ENCODE measurements at regions of chr1 and their contacts with region 1.

Region 1: GRCh38 chr1:47725992-47726855 is 271.0 kb downstream of the TRABD2B start:
- DNase-seq: peak; percentile 43
- ATAC-seq: peak; percentile 91
- H3K4me3 ChIP-seq: no peak overlapping the region
- H3K27ac ChIP-seq: no peak overlapping the region
- H3K4me1 ChIP-seq: peaks cover 17% of the 10 kb centered on the region; the same call in 1 of the 2 replicates
- H3K27me3 ChIP-seq: peaks cover 7 to 57% of the 10 kb centered on the region in 2 experiments; a peak in 4 of 5 replicates
- CTCF ChIP-seq: peak; percentile 91
- EP300 ChIP-seq: no peak
- POLR2A ChIP-seq: no peak
- RAD21 ChIP-seq: peak; percentile 70

Region 2: GRCh38 chr1:47388891-47389238 is 337.4 kb before region 1 on chr1:
- CTCF ChIA-PET with region 1: interaction called, 6 read pairs
- POLR2A ChIA-PET with region 1: no interaction called
- in situ Hi-C with region 1: no loop called
- intact Hi-C with region 1: loop called (anchors 5 kb)
- DNase-seq: peak; percentile 62
- ATAC-seq: peak; percentile 80
- H3K4me3 ChIP-seq: no peak overlapping the region
- H3K27ac ChIP-seq: no peak overlapping the region
- H3K4me1 ChIP-seq: peaks cover 54% of the 10 kb centered on the region
- H3K27me3 ChIP-seq: no peaks in the 10 kb centered on the region
- CTCF ChIP-seq: peak; percentile 83
- EP300 ChIP-seq: no peak
- POLR2A ChIP-seq: no peak; a peak in 1 of 4 replicates
- RAD21 ChIP-seq: peak; percentile 81

Region 3: GRCh38 chr1:47432071-47433036 is 293.9 kb before region 1 on chr1:
- CTCF ChIA-PET with region 1: interaction called, 7 read pairs
- POLR2A ChIA-PET with region 1: interaction called, 3 read pairs
- in situ Hi-C with region 1: no loop called
- intact Hi-C with region 1: loop called (anchors 1 kb)
- DNase-seq: peak; percentile 39
- ATAC-seq: peak; percentile 72
- H3K4me3 ChIP-seq: no peak overlapping the region
- H3K27ac ChIP-seq: no peak overlapping the region
- H3K4me1 ChIP-seq: peaks cover 21% of the 10 kb centered on the region
- H3K27me3 ChIP-seq: no peaks in the 10 kb centered on the region
- CTCF ChIP-seq: peak; percentile 86
- EP300 ChIP-seq: no peak
- POLR2A ChIP-seq: no peak
- RAD21 ChIP-seq: peak; percentile 71

Region 4: DNA sequence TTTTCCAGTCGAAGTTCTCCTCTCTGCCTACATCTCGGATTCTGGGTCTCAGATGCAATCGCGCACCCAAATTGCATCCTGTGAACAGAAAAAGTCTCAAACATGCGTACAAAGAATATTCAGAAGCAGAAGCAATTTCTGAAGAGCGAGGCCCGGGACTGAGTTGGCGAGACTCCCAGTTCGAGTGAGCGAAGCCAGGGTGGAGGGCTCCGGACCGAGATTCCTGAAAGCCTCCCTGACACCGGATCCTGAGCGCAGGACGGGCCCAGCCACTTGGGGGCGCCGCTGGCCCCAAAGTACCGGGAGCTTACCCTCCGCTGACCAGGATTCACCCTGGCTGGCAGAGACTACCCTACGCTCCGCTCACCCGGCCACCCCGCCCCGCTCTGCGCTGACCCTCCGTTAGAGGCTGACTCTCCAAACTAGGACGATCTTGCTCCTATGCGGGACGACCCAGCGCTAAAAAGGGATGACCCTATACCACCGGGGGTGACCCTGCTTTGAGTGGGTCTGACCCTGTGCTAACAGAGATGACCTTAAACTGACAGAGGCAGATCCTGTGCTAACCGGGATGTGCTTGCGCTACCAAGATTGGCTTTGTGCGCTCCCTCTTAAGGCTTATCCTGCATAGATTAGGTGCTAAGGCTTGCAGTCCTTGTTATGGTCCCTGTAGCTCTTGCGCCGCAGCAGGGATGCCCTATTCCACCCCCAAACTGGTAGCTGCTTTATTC is 276.2 kb before region 1 on chr1:
- CTCF ChIA-PET with region 1: no interaction called
- POLR2A ChIA-PET with region 1: no interaction called
- in situ Hi-C with region 1: no loop called
- intact Hi-C with region 1: loop called (anchors 5 kb)
- DNase-seq: peak; percentile 25
- ATAC-seq: peak; percentile 94
- H3K4me3 ChIP-seq: no peak overlapping the region
- H3K27ac ChIP-seq: no peak overlapping the region
- H3K4me1 ChIP-seq: no peaks in the 10 kb centered on the region
- H3K27me3 ChIP-seq: peaks cover 10 to 78% of the 10 kb centered on the region in 2 experiments; a peak in 4 of 5 replicates
- CTCF ChIP-seq: peak; percentile 79
- EP300 ChIP-seq: no peak
- POLR2A ChIP-seq: no peak
- RAD21 ChIP-seq: peak; percentile 77

Region 5: DNA sequence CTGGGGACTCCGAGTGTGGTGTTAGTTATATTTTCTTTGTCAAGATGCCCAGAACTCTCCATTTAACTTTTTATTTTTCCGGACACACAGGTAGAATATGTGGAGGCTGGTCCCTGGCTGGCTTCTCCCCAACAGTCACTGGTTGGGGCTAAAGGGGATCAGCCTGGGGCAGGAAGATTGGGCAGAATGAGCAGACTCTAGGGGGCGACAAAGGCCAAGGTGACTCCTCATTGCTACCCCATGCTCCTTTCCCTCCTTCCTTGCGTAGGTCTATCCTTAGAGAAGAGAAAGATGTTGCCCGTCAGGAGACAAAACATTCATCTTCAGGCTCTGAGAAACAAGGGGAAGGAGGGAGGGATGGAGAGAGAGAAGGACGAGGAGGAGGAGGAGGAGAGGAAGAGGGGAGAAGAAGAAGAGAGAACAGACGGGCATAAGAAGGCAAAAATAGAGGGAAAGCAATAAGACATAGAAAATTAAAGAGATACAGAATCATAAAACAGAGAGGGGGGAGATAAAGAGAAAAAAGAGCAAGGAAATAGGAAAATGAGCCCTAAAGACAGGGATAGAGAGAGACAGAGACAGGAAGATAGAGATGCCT is 198.5 kb before region 1 on chr1:
- CTCF ChIA-PET with region 1: interaction called, 5 read pairs
- POLR2A ChIA-PET with region 1: no interaction called
- in situ Hi-C with region 1: no loop called
- intact Hi-C with region 1: loop called (anchors 1 kb)
- DNase-seq: peak; percentile 12
- ATAC-seq: peak; percentile 64
- H3K4me3 ChIP-seq: no peak overlapping the region
- H3K27ac ChIP-seq: no peak overlapping the region
- H3K4me1 ChIP-seq: no peaks in the 10 kb centered on the region
- H3K27me3 ChIP-seq: peaks cover 3 to 6% of the 10 kb centered on the region in 2 experiments; a peak in 3 of 5 replicates
- CTCF ChIP-seq: peak; percentile 68
- EP300 ChIP-seq: no peak
- POLR2A ChIP-seq: no peak
- RAD21 ChIP-seq: no peak

Region 6: GRCh38 chr1:47776667-47777131 is 50.5 kb after region 1 on chr1:
- CTCF ChIA-PET with region 1: no interaction called
- POLR2A ChIA-PET with region 1: no interaction called
- in situ Hi-C with region 1: no loop called
- intact Hi-C with region 1: no loop called
- DNase-seq: no peak
- ATAC-seq: no peak
- H3K4me3 ChIP-seq: no peak overlapping the region
- H3K27ac ChIP-seq: no peak overlapping the region
- H3K4me1 ChIP-seq: peaks cover 45% of the 10 kb centered on the region
- H3K27me3 ChIP-seq: peaks cover 8 to 44% of the 10 kb centered on the region in 2 experiments; a peak in 3 of 5 replicates
- CTCF ChIP-seq: no peak
- EP300 ChIP-seq: no peak
- POLR2A ChIP-seq: no peak
- RAD21 ChIP-seq: no peak

Measured in HepG2 (cell line).